Activated B cell treated with CpG ODN at 0.5 μM for 24 hours (primary cell): ENCODE measurements at regions of chr2 and their contacts with region 1.

Region 1: DNA sequence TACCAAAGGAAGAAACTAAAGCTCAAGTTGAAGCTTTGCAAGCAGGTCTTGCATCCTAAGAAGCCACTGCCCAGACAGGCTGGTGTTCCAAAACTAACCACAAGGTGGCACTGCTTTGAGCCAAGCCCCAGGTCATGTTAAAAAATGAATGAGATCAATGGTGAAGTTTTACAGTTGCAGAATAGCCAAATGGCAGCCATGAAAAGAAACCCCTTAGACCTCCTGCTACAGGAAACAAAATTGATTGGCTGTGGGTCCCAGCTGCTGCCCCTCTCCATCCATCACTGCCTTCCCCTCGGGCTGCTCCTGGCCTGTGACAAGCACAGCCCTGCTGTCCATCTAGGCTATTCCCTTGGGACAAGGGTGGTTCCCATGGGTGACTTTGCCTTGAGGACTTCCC is 20.7 kb upstream of the MREG start:
- DNase-seq: peak; percentile 53
- ATAC-seq: peak; percentile 93
- H3K4me3 Mint-ChIP-seq: no peak overlapping the region
- H3K27ac Mint-ChIP-seq: no peak overlapping the region
- H3K4me1 Mint-ChIP-seq: peaks cover 8% of the 10 kb centered on the region
- H3K27me3 Mint-ChIP-seq: no peaks in the 10 kb centered on the region
- CTCF ChIP-seq: peak; percentile 52

Region 2: GRCh38 chr2:216023055-216023648 is 10.9 kb before region 1 on chr2:
- CTCF ChIA-PET with region 1: interaction called, 31 read pairs
- POLR2A ChIA-PET with region 1: no interaction called
- intact Hi-C with region 1: no loop called
- DNase-seq: no peak
- ATAC-seq: peak; percentile 49
- H3K4me3 Mint-ChIP-seq: no peak overlapping the region
- H3K27ac Mint-ChIP-seq: no peak overlapping the region
- H3K4me1 Mint-ChIP-seq: no peaks in the 10 kb centered on the region
- H3K27me3 Mint-ChIP-seq: no peaks in the 10 kb centered on the region
- CTCF ChIP-seq: no peak

Region 3: DNA sequence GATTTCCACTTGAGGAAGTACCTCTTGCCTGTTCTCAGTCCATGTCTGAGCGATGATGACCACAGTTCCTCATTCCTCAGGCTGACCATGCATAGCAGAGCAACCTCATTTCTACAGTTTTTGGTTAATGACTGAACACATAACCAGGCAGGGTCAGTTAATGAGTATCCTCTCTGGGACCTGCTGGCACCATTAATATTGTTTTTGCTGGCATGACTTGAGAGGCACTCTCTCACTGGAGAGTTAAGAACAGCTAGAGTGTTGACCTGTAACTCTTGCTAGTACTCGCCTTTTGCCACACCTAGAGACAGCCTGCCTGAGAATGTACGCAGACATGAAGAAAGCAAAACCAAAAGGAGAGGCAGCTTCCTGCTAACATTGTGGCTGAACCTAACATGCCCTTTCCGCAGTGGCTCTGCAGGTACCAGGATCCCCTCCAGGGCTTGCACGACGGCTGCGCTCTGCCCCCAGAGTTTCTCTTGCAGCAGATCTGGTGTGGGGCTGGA is 23.7 kb after region 1 on chr2:
- CTCF ChIA-PET with region 1: interaction called, 11 read pairs
- POLR2A ChIA-PET with region 1: no interaction called
- intact Hi-C with region 1: loop called (anchors 1 kb)
- DNase-seq: peak; percentile 25
- ATAC-seq: peak; percentile 83
- H3K4me3 Mint-ChIP-seq: peak overlapping the region; percentile 84
- H3K27ac Mint-ChIP-seq: peak overlapping the region; percentile 96
- H3K4me1 Mint-ChIP-seq: peaks cover 29% of the 10 kb centered on the region
- H3K27me3 Mint-ChIP-seq: no peaks in the 10 kb centered on the region
- CTCF ChIP-seq: no peak

Region 4: GRCh38 chr2:216108967-216109921 is 75.2 kb after region 1 on chr2 and contains the start of gene XRCC5:
- CTCF ChIA-PET with region 1: interaction called, 18 read pairs
- POLR2A ChIA-PET with region 1: no interaction called
- intact Hi-C with region 1: loop called (anchors 1 kb)
- DNase-seq: peak; percentile 93
- ATAC-seq: peak; percentile 88
- H3K4me3 Mint-ChIP-seq: peak within 1 kb of the TSS; percentile 99
- H3K27ac Mint-ChIP-seq: peak within 1 kb of the TSS; percentile 99
- H3K4me1 Mint-ChIP-seq: peaks cover 57% of the 10 kb centered on the region
- H3K27me3 Mint-ChIP-seq: no peaks in the 10 kb centered on the region
- CTCF ChIP-seq: no peak
- total RNA-seq, gene XRCC5: 303 and 311 TPM in 2 replicates

Region 5: DNA sequence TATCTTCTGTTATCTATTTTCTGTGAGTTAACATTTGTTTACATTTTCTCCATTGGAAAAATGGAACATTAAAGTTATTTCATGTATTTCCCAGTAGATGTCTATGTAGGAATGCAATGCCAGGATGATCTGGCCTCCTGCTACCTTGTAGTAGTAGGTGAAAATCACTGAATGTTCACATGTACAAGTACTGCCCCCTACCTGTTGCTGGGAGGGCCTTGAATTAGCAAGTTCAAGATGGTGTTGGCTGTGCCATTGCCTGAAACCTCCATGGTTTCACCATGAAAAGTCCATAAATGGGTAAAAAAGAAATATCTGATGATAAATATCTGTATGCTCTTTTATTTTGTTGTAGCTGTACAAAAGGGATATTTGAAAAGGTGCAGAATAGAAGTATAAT is 105.8 kb after region 1 on chr2:
- CTCF ChIA-PET with region 1: interaction called, 8 read pairs
- POLR2A ChIA-PET with region 1: no interaction called
- intact Hi-C with region 1: loop called (anchors 1 kb)
- DNase-seq: no peak
- ATAC-seq: peak; percentile 50
- H3K4me3 Mint-ChIP-seq: no peak overlapping the region
- H3K27ac Mint-ChIP-seq: no peak overlapping the region
- H3K4me1 Mint-ChIP-seq: peaks cover 2% of the 10 kb centered on the region
- H3K27me3 Mint-ChIP-seq: no peaks in the 10 kb centered on the region
- CTCF ChIP-seq: no peak

Region 6: DNA sequence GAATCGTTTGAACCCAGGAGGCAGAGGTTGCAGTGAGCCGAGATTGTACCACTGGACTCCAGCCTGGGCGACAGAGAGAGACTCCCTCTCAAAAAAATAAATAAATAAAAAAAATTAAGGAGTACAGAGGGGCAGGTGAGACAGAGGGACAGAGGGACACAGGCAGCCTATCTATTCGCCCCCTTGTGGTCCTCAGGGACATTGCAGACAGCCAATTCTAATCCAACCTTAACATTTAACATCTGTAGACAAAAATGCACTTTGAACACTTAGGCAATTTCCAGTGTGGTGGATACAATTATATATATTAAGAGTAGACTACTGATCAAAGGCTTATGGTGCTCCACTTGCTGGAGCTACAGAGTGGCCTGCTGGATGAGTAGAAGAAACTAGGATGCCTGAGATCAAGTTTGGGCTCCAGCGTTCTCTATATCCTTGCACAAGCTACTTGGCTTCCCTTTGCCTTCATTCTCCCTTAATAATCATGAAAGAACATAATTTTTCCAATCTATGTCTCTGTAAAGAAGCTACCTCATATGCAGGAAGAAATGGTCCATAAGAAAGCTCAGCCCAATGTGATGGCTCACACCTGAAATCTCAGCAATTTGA is 370.0 kb after region 1 on chr2:
- CTCF ChIA-PET with region 1: interaction called, 3 read pairs
- POLR2A ChIA-PET with region 1: no interaction called
- intact Hi-C with region 1: loop called (anchors 5 kb)
- DNase-seq: no peak
- ATAC-seq: peak; percentile 88
- H3K4me3 Mint-ChIP-seq: no peak overlapping the region
- H3K27ac Mint-ChIP-seq: no peak overlapping the region
- H3K4me1 Mint-ChIP-seq: no peaks in the 10 kb centered on the region
- H3K27me3 Mint-ChIP-seq: peaks cover 11% of the 10 kb centered on the region
- CTCF ChIP-seq: no peak

Region 7: GRCh38 chr2:216829533-216829932 is 795.5 kb after region 1 on chr2:
- CTCF ChIA-PET with region 1: no interaction called
- POLR2A ChIA-PET with region 1: no interaction called
- intact Hi-C with region 1: no loop called
- DNase-seq: no peak
- ATAC-seq: no peak
- H3K4me3 Mint-ChIP-seq: no peak overlapping the region
- H3K27ac Mint-ChIP-seq: no peak overlapping the region
- H3K4me1 Mint-ChIP-seq: no peaks in the 10 kb centered on the region
- H3K27me3 Mint-ChIP-seq: peaks cover 13% of the 10 kb centered on the region
- CTCF ChIP-seq: no peak